ENCODE measurements at regions of chr1 and their contacts with region 1.

Region 1: DNA sequence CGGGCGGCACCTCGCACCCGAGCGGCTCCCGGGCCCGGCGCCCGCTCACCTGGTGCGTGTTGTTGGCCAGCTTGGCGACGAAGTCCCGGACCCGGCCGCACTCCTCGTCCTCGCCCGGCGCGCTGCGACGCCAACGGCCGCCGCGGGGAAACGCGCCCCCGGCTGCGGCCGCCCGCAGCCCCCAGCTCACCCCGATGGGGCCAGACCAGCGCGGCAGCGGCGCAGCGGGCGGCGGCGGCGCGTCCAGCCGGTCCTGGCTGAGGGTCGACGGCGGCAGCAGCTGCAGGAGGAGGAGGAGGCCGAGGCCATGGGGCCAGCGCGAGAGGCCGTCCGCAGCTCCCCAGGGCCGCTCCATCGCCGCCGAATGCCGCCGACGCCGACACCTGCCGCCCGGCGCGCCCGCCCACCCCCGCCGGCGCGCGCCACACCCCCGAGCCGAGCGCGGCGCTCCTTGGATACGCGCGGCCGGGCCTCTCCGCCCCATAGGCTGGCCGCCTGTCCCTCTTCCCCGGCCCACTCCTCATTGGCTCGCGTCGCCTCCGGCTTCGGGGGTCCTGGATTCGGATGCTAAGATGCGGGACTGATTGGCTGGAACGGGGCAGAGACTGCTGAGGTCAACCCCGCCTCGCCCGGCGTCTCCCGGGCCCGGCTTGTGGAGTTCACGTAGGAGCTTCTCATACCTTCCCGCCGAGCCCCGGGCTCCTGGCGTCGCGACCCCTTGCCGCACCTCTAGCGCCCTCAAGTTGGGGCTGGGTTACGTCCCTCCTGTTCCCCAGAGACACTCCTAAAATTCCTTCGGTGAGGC is at the start of gene SORT1:
- DNase-seq: peak; percentile 25 to 84 (median 71)
- ATAC-seq: peak; percentile 97
- H3K4me3 ChIP-seq: peak within 1 kb of the TSS; percentile 49 to 53
- H3K4me3 Mint-ChIP-seq: peak within 1 kb of the TSS; percentile 83
- H3K27ac ChIP-seq: no peak within 1 kb of the TSS
- H3K27ac Mint-ChIP-seq: no peak within 1 kb of the TSS
- H3K4me1 ChIP-seq: peaks cover 9% of the 10 kb centered on the region
- H3K4me1 Mint-ChIP-seq: peaks cover 15% of the 10 kb centered on the region
- H3K27me3 ChIP-seq: peaks cover 10 to 21% of the 10 kb centered on the region in 2 experiments
- H3K27me3 Mint-ChIP-seq: peaks cover 34% of the 10 kb centered on the region
- CTCF ChIP-seq: no peak
- total RNA-seq, gene SORT1: 0.61 to 0.73 TPM

Region 2: GRCh38 chr1:107870696-107871095 is 1527.0 kb before region 1 on chr1:
- CTCF ChIA-PET with region 1: no interaction called
- POLR2A ChIA-PET with region 1: no interaction called
- intact Hi-C with region 1: no loop called
- DNase-seq: no peak
- ATAC-seq: no peak
- H3K4me3 ChIP-seq: no peak overlapping the region
- H3K4me3 Mint-ChIP-seq: no peak overlapping the region
- H3K27ac ChIP-seq: peak overlapping the region in 1 of 2 experiments; percentile 23
- H3K27ac Mint-ChIP-seq: no peak overlapping the region
- H3K4me1 ChIP-seq: peaks cover 10% of the 10 kb centered on the region
- H3K4me1 Mint-ChIP-seq: peaks cover 29% of the 10 kb centered on the region
- H3K27me3 ChIP-seq: no peaks in the 10 kb centered on the region
- H3K27me3 Mint-ChIP-seq: no peaks in the 10 kb centered on the region
- CTCF ChIP-seq: no peak

Region 3: DNA sequence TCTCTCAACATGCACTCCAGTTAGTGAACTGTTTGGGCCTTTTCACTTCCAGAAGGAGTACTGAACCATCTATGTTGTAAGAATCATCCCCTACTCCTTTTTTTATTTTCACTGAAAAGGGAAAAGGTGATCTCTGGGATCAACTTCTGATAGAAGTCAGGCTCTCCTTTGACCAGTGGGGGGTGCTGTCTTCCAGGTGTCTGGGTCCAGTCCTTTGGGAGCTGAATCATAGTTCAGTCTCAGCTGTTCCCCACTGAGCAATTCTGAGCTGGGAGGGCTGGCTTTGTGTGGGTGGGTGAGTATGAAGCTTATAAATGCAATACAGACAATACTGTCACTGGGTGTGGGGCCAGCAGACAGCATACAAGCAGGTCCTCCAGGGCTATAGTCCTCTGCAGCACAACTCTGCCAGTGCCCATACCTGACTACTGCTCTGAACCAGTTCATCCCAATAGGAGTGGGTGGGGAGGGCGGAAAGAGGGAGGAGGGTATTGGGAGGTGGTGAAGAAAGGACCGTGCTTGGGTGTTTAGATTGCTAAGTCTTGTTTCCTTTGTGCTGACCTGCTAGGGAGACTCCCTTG is 196.5 kb before region 1 on chr1:
- CTCF ChIA-PET with region 1: interaction called, 8 read pairs
- POLR2A ChIA-PET with region 1: no interaction called
- intact Hi-C with region 1: loop called in 1 of 2 experiments (anchors 1 kb)
- DNase-seq: peak in 5 of 9 experiments; percentile 23 to 37 (median 29)
- ATAC-seq: peak; percentile 23
- H3K4me3 ChIP-seq: no peak overlapping the region
- H3K4me3 Mint-ChIP-seq: no peak overlapping the region
- H3K27ac ChIP-seq: no peak overlapping the region
- H3K27ac Mint-ChIP-seq: no peak overlapping the region
- H3K4me1 ChIP-seq: peaks cover 10% of the 10 kb centered on the region
- H3K4me1 Mint-ChIP-seq: peaks cover 14% of the 10 kb centered on the region
- H3K27me3 ChIP-seq: no peaks in the 10 kb centered on the region
- H3K27me3 Mint-ChIP-seq: no peaks in the 10 kb centered on the region
- CTCF ChIP-seq: peak; percentile 8

Region 4: DNA sequence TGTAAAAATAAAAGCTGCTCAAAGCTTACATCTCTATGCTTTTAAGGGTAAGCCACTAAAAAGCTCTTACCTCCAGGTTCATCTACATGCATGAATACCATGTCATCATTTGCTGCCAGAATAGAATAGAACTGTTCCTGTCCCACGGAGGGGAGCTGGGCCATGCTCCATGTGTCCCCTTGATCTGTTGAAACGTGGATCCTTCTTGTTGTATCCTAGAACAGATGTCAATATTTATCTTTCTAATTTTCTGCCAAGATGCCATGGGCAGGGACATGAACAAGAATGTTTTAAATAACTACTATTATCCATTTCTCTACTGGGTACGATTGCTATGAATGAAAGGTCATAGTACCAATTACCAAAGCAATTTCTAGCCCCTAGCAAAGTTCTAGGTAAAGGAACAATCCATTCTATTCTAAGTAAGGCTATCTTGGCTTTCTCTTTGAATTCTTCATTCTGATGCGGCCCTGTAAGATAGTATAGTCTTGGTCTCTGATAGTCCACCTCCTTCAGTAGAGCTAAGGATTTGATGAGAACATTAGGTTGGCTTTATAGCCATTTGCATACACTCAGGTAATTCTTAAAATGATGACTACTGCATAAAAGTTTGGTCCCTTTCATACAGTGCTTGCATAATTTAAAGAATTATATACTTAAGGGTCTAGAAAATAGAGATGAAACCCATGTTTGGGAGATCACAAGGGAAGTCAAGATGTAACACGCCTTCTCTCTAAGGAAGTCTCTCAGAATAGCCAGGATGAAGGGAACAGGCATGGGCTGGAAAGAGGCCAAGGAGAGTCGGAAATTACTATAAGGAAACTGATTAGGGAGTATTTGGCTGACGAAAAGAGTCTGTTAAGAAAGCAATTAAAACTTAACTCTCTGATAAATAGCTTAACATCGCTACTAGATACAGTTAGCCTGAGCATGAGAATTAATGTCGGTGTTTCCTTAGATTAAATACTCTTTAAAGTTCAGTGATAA is 55.5 kb before region 1 on chr1:
- CTCF ChIA-PET with region 1: no interaction called
- POLR2A ChIA-PET with region 1: no interaction called
- intact Hi-C with region 1: no loop called
- DNase-seq: no peak
- ATAC-seq: no peak
- H3K4me3 ChIP-seq: no peak overlapping the region
- H3K4me3 Mint-ChIP-seq: no peak overlapping the region
- H3K27ac ChIP-seq: no peak overlapping the region
- H3K27ac Mint-ChIP-seq: no peak overlapping the region
- H3K4me1 ChIP-seq: no peaks in the 10 kb centered on the region
- H3K4me1 Mint-ChIP-seq: no peaks in the 10 kb centered on the region
- H3K27me3 ChIP-seq: peaks cover 0 to 4% of the 10 kb centered on the region in 2 experiments
- H3K27me3 Mint-ChIP-seq: no peaks in the 10 kb centered on the region
- CTCF ChIP-seq: no peak

Measured in CD8-positive, alpha-beta T cell (primary cell).